Sigmoid colon (tissue), 7 donors: ENCODE measurements at regions of chr20 and their contacts with region 1.

Region 1: GRCh38 chr20:20360464-20360863 is 7.4 kb upstream of the INSM1 start:
- DNase-seq: no peak
- H3K4me3 ChIP-seq: no peak overlapping the region
- H3K27ac ChIP-seq: no peak overlapping the region
- H3K4me1 ChIP-seq: peaks cover 0 to 18% (median 4%) of the 10 kb centered on the region in 4 donors
- H3K27me3 ChIP-seq: peaks cover 18 to 66% (median 30%) of the 10 kb centered on the region in 3 donors
- CTCF ChIP-seq: peak; percentile 19 to 65 (median 52)
- EP300 ChIP-seq: no peak
- POLR2A ChIP-seq: no peak

Region 2: GRCh38 chr20:20338133-20338730 is 22.2 kb before region 1 on chr20:
- intact Hi-C with region 1: no loop called
- DNase-seq: no peak
- H3K4me3 ChIP-seq: no peak overlapping the region
- H3K27ac ChIP-seq: no peak overlapping the region
- H3K4me1 ChIP-seq: peaks cover 0 to 4% (median 0%) of the 10 kb centered on the region in 4 donors
- H3K27me3 ChIP-seq: peaks cover 0 to 4% (median 0%) of the 10 kb centered on the region in 3 donors
- CTCF ChIP-seq: no peak
- EP300 ChIP-seq: no peak
- POLR2A ChIP-seq: no peak

Region 3: DNA sequence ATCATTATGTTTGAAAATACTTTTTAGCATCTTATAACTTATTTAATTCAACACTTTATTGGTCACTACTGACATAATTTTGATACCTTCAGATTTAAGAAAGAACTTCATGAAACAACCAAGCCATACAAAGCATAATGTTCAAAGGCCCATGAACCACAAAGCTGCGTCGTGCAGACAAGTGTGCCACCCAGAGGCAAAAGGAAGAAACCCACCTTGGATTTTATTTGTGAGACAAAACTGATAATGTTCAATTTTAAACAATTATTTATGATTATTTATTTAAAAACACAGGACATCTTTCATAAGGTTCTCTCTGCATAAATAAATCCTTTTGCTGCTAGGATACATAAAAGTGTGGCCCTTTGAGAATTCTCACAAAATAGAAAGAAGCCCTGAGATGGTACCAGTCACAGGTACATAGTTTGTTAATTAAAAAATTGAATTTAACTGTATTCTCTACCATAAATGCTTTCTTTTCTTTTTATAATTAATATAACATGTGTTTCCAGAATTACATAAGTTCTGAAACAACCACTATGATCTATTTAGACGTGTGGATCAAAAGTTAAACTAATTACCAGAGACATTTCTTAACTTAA is 208.2 kb after region 1 on chr20:
- intact Hi-C with region 1: loop called (anchors 2 kb)
- DNase-seq: no peak
- H3K4me3 ChIP-seq: no peak overlapping the region
- H3K27ac ChIP-seq: no peak overlapping the region
- H3K4me1 ChIP-seq: no peaks in the 10 kb centered on the region
- H3K27me3 ChIP-seq: no peaks in the 10 kb centered on the region
- CTCF ChIP-seq: peak in 2 of 4 experiments; percentile 43 to 54
- EP300 ChIP-seq: no peak
- POLR2A ChIP-seq: no peak